BJ (cell line): ENCODE measurements at regions of chr15 and their contacts with region 1.

Region 1: GRCh38 chr15:84633311-84634227 is 20.5 kb downstream of the WDR73 start:
- DNase-seq: no peak
- H3K4me3 ChIP-seq: peak overlapping the region; percentile 56
- H3K27me3 ChIP-seq: no peaks in the 10 kb centered on the region
- CTCF ChIP-seq: no peak

Region 2: GRCh38 chr15:83899670-83900069 is 733.9 kb before region 1 on chr15:
- CTCF ChIA-PET with region 1: no interaction called
- POLR2A ChIA-PET with region 1: no interaction called
- DNase-seq: no peak
- H3K4me3 ChIP-seq: no peak overlapping the region
- H3K27me3 ChIP-seq: no peaks in the 10 kb centered on the region
- CTCF ChIP-seq: no peak

Region 3: DNA sequence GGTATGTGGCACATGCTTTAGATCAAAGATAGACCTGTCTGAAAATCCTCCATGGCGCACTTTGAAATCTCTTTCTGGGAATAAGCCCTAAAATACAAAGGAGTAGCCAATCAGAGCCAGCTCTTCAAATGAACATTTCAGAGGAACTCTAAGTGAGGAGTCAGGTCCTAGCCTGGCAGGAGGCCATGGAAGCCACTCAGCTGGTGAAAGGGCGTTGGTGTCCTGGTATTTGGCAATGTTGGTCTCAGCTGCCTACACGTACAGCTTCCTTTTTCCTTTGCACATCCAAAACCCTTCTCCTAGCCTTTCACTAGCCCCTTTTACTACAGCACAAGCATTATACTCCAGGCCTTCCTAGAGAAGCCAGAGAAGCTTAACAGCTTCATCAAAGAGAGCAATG is 15.0 kb after region 1 on chr15:
- CTCF ChIA-PET with region 1: interaction called, 3 read pairs
- POLR2A ChIA-PET with region 1: interaction called, 20 read pairs
- DNase-seq: no peak
- H3K4me3 ChIP-seq: no peak overlapping the region
- H3K27me3 ChIP-seq: no peaks in the 10 kb centered on the region
- CTCF ChIP-seq: no peak